Activated T-helper 2 cell treated with anti-CD3 and anti-CD28 coated beads, Interferon-gamma antibody, Interleukin-2, Interleukin-4, amounts not matched to agents 10 μg/mL and 5 μg/mL and 100 μg/mL, durations not matched to agents 14 hours and 24 hours and 36 hours (primary cell): ENCODE measurements at regions of chr21 and their contacts with region 1.

Region 1: DNA sequence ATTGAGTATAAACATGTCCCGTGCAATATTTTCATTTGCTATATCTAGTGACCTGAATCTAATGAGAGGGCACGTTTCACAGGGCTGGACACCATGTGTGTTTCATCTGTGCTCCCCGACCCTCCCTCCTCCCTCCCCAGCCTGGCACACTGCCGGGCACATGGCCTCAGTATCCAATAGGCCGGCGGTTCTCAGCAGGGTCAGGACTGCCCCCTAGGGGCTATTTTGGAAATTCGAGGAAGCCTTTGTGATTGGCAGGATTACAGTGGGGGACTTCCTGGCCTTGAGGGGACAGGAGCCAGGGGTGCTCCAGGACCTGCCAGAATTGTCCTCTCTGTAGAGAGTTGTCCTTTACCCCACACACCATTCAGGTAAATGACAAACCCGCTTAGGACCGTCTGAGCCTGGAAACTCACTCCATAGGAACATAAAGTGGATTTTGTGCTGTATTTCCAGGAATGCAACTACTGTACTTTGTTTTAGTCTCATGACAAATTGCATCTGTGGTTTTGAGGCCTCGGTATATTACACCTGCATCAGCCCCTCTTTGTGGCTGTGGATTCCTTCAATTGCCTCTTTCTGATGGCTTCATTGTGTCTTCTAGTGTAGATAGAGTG is 109.5 kb upstream of the SIM2 start:
- DNase-seq: peak; percentile 23
- H3K4me3 Mint-ChIP-seq: no peak overlapping the region
- H3K27ac Mint-ChIP-seq: no peak overlapping the region
- H3K4me1 Mint-ChIP-seq: peaks cover 5% of the 10 kb centered on the region
- H3K27me3 Mint-ChIP-seq: no peaks in the 10 kb centered on the region

Region 2: GRCh38 chr21:36419996-36420395 is 169.5 kb before region 1 on chr21:
- intact Hi-C with region 1: loop called (anchors 1 kb)
- DNase-seq: peak; percentile 27
- H3K4me3 Mint-ChIP-seq: no peak overlapping the region
- H3K27ac Mint-ChIP-seq: no peak overlapping the region
- H3K4me1 Mint-ChIP-seq: peaks cover 18% of the 10 kb centered on the region
- H3K27me3 Mint-ChIP-seq: no peaks in the 10 kb centered on the region

Region 3: GRCh38 chr21:36504067-36505058 is 85.1 kb before region 1 on chr21:
- intact Hi-C with region 1: loop called (anchors 2 kb)
- DNase-seq: no peak
- H3K4me3 Mint-ChIP-seq: no peak overlapping the region
- H3K27ac Mint-ChIP-seq: no peak overlapping the region
- H3K4me1 Mint-ChIP-seq: no peaks in the 10 kb centered on the region
- H3K27me3 Mint-ChIP-seq: peaks cover 2% of the 10 kb centered on the region

Region 4: DNA sequence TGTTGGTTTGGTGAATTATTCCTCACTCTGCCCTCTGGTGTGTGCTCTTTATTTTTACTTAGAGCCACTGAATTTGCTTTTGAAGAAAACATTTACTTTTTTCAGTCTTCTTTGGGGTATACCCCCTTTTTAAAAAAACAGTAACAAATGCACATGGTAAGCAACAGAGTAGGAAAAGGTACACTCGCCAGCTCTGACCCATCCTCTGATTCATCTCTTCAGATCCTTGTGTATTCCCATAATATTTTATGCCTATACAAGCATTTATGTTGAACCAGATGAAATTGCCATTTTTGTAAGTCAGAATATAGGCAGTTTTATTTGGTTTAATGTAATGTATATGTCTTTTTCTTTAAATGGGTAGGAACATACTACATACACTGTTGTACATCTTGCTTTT is 511.9 kb after region 1 on chr21:
- intact Hi-C with region 1: no loop called
- DNase-seq: no peak
- H3K4me3 Mint-ChIP-seq: no peak overlapping the region
- H3K27ac Mint-ChIP-seq: no peak overlapping the region
- H3K4me1 Mint-ChIP-seq: no peaks in the 10 kb centered on the region
- H3K27me3 Mint-ChIP-seq: no peaks in the 10 kb centered on the region